ENCODE measurements at regions of chr20 and their contacts with region 1.

Region 1: GRCh38 chr20:35871311-35871771 is 83.0 kb downstream of the SCAND1 start:
- DNase-seq: peak in 1 of 2 donors; percentile 35
- ATAC-seq: peak in 1 of 2 donors; percentile 11
- H3K4me3 ChIP-seq: peak overlapping the region in 3 of 4 donors; percentile 4 to 16 (median 9)
- H3K27ac ChIP-seq: peak overlapping the region; percentile 78 to 91 (median 84)
- H3K4me1 ChIP-seq: peaks cover 43% of the 10 kb centered on the region in 2 donors
- H3K27me3 ChIP-seq: no peaks in the 10 kb centered on the region
- CTCF ChIP-seq: no peak
- POLR2A ChIP-seq: no peak

Region 2: DNA sequence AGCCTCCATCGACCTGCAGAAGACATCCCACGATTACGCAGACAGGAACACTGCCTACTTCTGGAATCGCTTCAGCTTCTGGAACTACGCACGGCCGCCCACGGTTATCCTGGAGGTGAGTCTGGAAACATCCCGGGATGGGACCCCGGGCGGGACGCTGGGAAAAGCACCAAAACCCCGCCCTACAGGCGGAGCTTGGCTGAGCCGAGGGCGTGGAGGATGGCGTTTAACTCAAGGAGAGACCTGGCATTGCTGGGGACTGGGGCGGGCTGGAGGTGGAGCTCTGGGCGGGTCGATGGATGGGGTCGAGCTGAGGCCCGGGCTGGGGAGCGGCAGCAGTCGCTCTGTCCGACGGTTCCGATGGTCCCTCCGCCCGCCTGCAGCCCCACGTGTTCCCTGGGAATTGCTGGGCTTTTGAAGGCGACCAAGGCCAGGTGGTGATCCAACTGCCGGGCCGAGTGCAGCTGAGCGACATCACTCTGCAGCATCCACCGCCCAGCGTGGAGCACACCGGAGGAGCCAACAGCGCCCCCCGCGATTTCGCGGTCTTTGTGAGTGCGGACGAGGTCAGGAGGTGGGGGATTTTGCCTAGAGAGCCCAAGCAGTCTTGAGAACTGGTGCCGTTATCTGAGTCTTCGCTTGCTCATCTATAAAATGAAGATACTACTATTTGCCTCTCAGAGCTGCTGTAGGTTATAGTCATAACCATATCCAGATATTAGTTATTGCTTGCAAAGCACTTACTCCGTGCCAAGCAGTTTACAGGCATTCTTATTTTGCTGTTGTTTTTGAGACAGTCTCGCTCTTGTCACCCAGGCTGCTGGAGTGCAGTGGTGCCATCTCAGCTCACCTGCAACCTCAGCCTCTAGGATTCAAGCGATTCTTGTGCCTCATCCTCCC is 251.9 kb before region 1 on chr20:
- in situ Hi-C with region 1: no loop called
- intact Hi-C with region 1: no loop called
- DNase-seq: peak; percentile 27 to 42
- ATAC-seq: no peak
- H3K4me3 ChIP-seq: peak overlapping the region; percentile 46 to 71 (median 71)
- H3K27ac ChIP-seq: peak overlapping the region in 3 of 4 donors; percentile 24 to 86 (median 85)
- H3K4me1 ChIP-seq: peaks cover 18 to 32% of the 10 kb centered on the region in 2 donors
- H3K27me3 ChIP-seq: no peaks in the 10 kb centered on the region
- CTCF ChIP-seq: peak in 1 of 5 experiments; percentile 35
- POLR2A ChIP-seq: peak in 1 of 2 donors; percentile 38

Region 3: GRCh38 chr20:35828434-35828833 is 42.9 kb before region 1 on chr20:
- in situ Hi-C with region 1: no loop called
- intact Hi-C with region 1: loop called (anchors 2 kb)
- DNase-seq: peak; percentile 80 to 94
- ATAC-seq: peak; percentile 95 to 97
- H3K4me3 ChIP-seq: no peak overlapping the region
- H3K27ac ChIP-seq: peak overlapping the region; percentile 78 to 91 (median 84)
- H3K4me1 ChIP-seq: peaks cover 32 to 34% of the 10 kb centered on the region in 2 donors
- H3K27me3 ChIP-seq: no peaks in the 10 kb centered on the region
- CTCF ChIP-seq: no peak
- POLR2A ChIP-seq: no peak

Region 4: GRCh38 chr20:36064658-36065426 is 193.5 kb after region 1 on chr20:
- in situ Hi-C with region 1: no loop called
- intact Hi-C with region 1: no loop called
- DNase-seq: peak; percentile 87 to 93
- ATAC-seq: peak; percentile 95 to 97
- H3K4me3 ChIP-seq: peak overlapping the region; percentile 65 to 95 (median 68)
- H3K27ac ChIP-seq: peak overlapping the region; percentile 89 to 91 (median 91)
- H3K4me1 ChIP-seq: no peaks in the 10 kb centered on the region
- H3K27me3 ChIP-seq: no peaks in the 10 kb centered on the region
- CTCF ChIP-seq: peak in 1 of 5 experiments; percentile 16
- POLR2A ChIP-seq: peak; percentile 75 to 87

Region 5: DNA sequence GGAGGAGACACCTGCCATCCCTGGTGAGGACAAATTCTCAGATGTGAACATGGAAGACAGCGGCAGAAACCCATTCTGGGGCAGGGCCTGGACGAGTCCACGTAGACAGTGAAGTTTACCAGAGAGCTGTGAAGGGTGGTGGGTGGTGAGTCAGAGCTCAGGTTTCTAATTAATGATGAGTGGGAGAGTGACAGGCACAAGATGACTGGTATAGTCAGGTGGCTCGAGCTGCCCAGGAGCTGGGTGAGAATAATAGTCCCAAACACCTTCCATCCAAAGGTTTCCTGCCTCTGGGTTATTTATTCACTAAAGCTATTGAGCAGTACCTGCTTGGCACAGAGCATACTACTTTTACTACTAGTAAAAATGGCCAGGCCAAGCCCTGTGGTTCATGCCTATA is 1010.5 kb after region 1 on chr20:
- in situ Hi-C with region 1: no loop called
- intact Hi-C with region 1: no loop called
- DNase-seq: no peak
- ATAC-seq: no peak
- H3K4me3 ChIP-seq: no peak overlapping the region
- H3K27ac ChIP-seq: no peak overlapping the region
- H3K4me1 ChIP-seq: no peaks in the 10 kb centered on the region
- H3K27me3 ChIP-seq: no peaks in the 10 kb centered on the region
- CTCF ChIP-seq: no peak
- POLR2A ChIP-seq: no peak